IMR-90 (cell line): ENCODE measurements at regions of chr5 and their contacts with region 1.

Region 1: DNA sequence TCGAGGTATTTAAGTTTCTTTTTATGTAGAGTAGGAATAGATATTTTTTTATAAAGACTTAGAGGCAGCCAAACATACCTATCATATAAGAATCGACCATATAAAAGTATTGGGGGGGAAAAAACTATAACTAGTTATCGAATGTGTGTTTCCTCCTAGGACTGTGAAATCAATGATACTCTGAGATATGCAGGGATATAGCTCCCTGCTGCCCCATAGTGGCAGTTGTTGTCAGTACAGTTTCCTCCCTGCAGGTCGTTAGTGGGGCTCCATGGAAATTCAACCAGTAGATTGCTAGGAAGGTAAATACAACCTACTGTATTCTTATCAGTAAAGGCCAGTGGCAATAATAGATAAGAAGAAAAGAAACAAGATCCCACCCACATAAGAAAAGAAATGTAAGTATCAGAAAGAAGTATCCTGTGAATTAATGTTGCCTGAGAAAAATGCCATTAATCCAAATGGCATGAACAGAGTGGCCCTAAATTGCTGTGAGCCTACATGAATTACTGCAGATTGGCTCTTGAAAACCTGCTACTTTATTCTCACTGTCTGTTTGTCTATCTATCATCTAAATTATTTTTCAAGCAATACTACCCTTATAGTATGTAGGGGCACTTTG is 136.9 kb upstream of the FBN2 start:
- DNase-seq: peak; percentile 57
- ATAC-seq: peak; percentile 95
- H3K4me3 ChIP-seq: no peak overlapping the region
- H3K27ac ChIP-seq: no peak overlapping the region
- H3K4me1 ChIP-seq: no peaks in the 10 kb centered on the region; the same call in 1 of the 2 replicates
- H3K27me3 ChIP-seq: no peaks in the 10 kb centered on the region; the same call in 1 of the 2 replicates
- CTCF ChIP-seq: peak; percentile 83
- POLR2A ChIP-seq: no peak
- RAD21 ChIP-seq: peak; percentile 87

Region 2: DNA sequence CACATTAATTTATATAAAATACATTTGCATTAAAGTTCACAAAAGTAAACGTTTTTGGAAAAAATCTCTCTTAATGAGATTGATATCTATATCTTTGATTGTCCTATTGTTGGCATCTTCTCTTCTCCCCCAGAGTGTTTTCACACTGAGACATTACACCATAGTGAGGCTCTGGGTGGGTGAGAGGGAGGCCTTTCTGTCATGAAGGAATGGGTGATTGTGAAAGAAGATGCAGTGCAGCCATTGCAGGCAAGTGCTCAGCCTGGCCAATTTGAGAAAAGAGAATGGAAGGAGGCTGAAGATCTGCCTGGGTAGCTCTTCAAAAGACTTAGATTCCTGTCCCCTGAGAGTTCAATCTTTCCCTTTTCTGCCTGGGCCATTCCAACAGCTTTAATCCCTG is 450.6 kb before region 1 on chr5:
- CTCF ChIA-PET with region 1: no interaction called
- POLR2A ChIA-PET with region 1: no interaction called
- dilution Hi-C with region 1: no loop called
- in situ Hi-C with region 1: loop called (anchors 5 kb)
- intact Hi-C with region 1: no loop called
- DNase-seq: no peak
- ATAC-seq: no peak; the same call in 1 of the 2 replicates
- H3K4me3 ChIP-seq: no peak overlapping the region
- H3K27ac ChIP-seq: no peak overlapping the region
- H3K4me1 ChIP-seq: peaks cover 3% of the 10 kb centered on the region
- H3K27me3 ChIP-seq: peaks cover 1% of the 10 kb centered on the region; the same call in 1 of the 2 replicates
- CTCF ChIP-seq: no peak
- POLR2A ChIP-seq: no peak
- RAD21 ChIP-seq: no peak

Region 3: DNA sequence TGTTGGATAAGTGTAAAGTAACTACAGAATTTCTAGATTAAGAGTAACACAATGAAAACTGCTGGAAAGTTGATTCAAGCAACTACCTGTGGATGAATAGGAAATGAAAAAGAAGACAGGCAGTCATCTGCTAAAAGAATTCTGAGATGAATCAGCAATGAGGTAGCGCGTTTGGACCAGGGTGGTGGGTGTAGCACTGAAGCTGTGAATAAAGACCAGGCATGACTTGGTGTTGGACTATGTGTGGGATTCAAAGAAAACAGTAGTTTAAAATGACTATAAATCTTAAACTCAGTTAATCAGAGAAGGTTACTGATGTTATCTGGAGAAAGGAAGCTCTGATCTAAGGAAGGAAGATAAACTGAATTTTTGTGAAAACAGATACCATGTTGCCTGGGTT is 296.7 kb before region 1 on chr5:
- CTCF ChIA-PET with region 1: no interaction called
- POLR2A ChIA-PET with region 1: no interaction called
- dilution Hi-C with region 1: no loop called
- in situ Hi-C with region 1: no loop called
- intact Hi-C with region 1: loop called (anchors 10 kb)
- DNase-seq: peak; percentile 28
- ATAC-seq: 0 out of 2 replicates have a peak, but pooled peaks have one; percentile 35
- H3K4me3 ChIP-seq: no peak overlapping the region
- H3K27ac ChIP-seq: no peak overlapping the region
- H3K4me1 ChIP-seq: no peaks in the 10 kb centered on the region
- H3K27me3 ChIP-seq: no peaks in the 10 kb centered on the region
- CTCF ChIP-seq: no peak
- POLR2A ChIP-seq: no peak
- RAD21 ChIP-seq: no peak